Calu3 (cell line): ENCODE measurements at regions of chr19 and their contacts with region 1.

Region 1: DNA sequence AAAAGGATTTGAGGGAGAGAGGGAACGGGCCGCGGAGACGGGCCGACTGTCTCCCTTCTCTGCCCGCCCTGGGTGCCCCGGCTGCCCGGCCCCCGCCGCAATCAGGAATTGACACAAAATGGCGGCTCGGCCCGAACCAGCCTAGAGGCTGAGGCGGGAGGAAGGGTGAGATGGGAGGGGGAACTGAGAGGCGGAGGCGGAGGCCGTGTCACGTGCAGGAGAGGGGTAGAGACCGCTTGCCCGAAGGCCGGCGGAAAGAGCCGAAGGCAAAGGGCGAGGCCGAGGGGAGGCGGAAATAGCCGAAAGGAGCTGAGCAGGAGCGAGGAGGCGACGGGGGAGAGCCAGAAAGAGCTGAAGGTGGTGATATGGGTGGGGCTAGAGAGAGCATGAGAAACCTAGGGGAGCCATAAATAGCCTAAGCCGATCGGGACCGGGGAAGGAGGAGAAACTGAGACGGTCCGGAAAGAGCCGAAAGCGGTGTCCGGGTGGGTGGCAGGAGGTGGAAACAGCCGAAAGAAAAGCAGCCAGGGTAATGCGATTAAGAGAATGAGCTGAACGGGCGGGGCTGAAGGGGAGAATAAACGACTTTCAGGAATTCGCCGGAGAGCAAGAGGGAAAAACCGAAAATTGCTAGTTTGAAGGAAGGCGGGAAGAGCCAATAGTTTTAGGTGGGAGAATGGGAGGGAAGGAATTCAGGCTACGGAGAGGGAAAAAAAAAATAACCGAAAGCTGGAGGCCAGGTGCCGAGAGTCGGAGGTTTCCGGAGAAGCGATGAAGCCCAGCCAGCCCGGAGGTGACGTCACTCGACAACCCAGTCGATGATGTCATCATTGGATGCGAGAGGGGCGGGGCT is at the start of gene ZC3H4:
- DNase-seq: peak; percentile 100
- H3K4me3 Mint-ChIP-seq: peak within 1 kb of the TSS; percentile 75
- H3K27ac Mint-ChIP-seq: peak within 1 kb of the TSS; percentile 97
- H3K4me1 Mint-ChIP-seq: peaks cover 33% of the 10 kb centered on the region
- H3K27me3 Mint-ChIP-seq: no peaks in the 10 kb centered on the region
- CTCF ChIP-seq: no peak
- total RNA-seq, gene ZC3H4: 73.0 and 85.2 TPM in 2 replicates

Region 2: GRCh38 chr19:47005873-47006272 is 107.3 kb before region 1 on chr19:
- CTCF ChIA-PET with region 1: no interaction called
- intact Hi-C with region 1: no loop called
- DNase-seq: peak; percentile 58
- H3K4me3 Mint-ChIP-seq: no peak overlapping the region
- H3K27ac Mint-ChIP-seq: no peak overlapping the region
- H3K4me1 Mint-ChIP-seq: no peaks in the 10 kb centered on the region
- H3K27me3 Mint-ChIP-seq: no peaks in the 10 kb centered on the region
- CTCF ChIP-seq: no peak

Region 3: GRCh38 chr19:47081111-47081510 is 32.1 kb before region 1 on chr19:
- CTCF ChIA-PET with region 1: interaction called, 33 read pairs
- intact Hi-C with region 1: no loop called
- DNase-seq: no peak
- H3K4me3 Mint-ChIP-seq: no peak overlapping the region
- H3K27ac Mint-ChIP-seq: no peak overlapping the region
- H3K4me1 Mint-ChIP-seq: no peaks in the 10 kb centered on the region
- H3K27me3 Mint-ChIP-seq: no peaks in the 10 kb centered on the region
- CTCF ChIP-seq: no peak